A549 (cell line): ENCODE measurements at regions of chr4 and their contacts with region 1.

Region 1: GRCh38 chr4:687048-687970 is 1.6 kb downstream of the SLC49A3 start:
- DNase-seq: peak; percentile 87 to 91
- ATAC-seq: peak; percentile 83 to 90
- H3K4me3 ChIP-seq: peak overlapping the region; percentile 20; the same call in 2 of the 3 replicates
- H3K27ac ChIP-seq: peak overlapping the region; percentile 76 to 98
- H3K4me1 ChIP-seq: peaks cover 23% of the 10 kb centered on the region
- CTCF ChIP-seq: no peak
- EP300 ChIP-seq: no peak
- POLR2A ChIP-seq: peak; percentile 52
- RAD21 ChIP-seq: no peak

Region 2: DNA sequence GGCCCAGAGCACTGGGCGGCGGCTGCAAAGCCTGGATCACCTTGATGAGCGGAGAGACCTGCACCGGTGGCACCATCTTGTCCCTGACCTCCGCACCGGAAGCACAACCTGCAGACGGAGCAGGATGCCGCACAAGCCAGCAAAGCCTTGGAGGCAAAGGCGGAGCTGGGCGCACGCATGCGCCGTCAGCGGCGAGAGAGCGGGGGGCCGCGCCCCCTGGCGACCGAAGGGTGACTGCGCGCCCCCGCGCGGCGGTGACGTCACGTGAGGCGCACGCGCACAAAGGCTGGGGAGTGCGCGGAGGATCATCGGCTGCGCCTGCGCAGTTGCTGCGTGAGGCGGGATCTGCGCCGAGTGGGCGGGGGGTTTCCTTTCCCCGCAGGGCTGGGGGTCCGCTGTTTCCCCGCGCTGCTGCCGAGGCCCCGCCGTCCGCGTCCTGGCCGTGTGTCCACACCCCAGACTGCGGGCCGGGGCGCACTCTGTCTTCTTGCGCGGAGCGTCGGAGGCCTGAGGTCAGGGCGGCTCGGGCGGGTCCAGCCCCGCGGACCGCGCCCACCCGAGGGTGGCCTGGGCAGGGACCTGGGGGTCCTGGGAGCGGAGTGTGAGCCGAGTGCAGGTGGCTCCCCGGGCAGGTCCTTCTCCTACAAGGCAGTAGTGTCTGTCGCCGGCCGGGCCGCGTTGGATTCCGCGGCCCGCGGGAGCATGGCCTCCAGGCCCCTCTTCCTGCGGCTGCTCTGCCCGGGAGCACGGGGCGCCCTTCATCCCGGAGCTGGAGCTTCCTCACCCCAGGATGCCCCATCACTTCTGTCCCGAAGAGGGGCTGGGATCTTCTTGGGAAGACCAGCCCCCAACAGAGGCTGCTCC is 12.9 kb before region 1 on chr4 and contains the starts of genes ATP5ME and MYL5:
- CTCF ChIA-PET with region 1: interaction called, 6 read pairs
- POLR2A ChIA-PET with region 1: interaction called, 10 read pairs
- DNase-seq: peak; percentile 94 to 95
- ATAC-seq: peak; percentile 88 to 93
- H3K4me3 ChIP-seq: peak within 1 kb of the TSS; percentile 96
- H3K27ac ChIP-seq: peak within 1 kb of the TSS; percentile 97 to 99
- H3K4me1 ChIP-seq: peaks cover 10% of the 10 kb centered on the region; the same call in 2 of the 3 replicates
- CTCF ChIP-seq: peak; percentile 69
- EP300 ChIP-seq: no peak
- POLR2A ChIP-seq: peak; percentile 65
- RAD21 ChIP-seq: peak in 1 of 2 experiments; percentile 47; a peak in 4 of 5 replicates
- polyA plus RNA-seq, gene ATP5ME: 198 and 214 TPM in 2 replicates
- polyA plus RNA-seq, gene MYL5: 7.6 and 8.0 TPM in 2 replicates